CD8-positive, alpha-beta memory T cell (primary cell): ENCODE measurements at regions of chr6 and their contacts with region 1.

Region 1: GRCh38 chr6:89117211-89118108 is at the start of gene SRSF12:
- DNase-seq: peak; percentile 7 to 58 (median 38)
- H3K4me3 ChIP-seq: peak within 1 kb of the TSS; percentile 20
- H3K4me3 Mint-ChIP-seq: peak within 1 kb of the TSS; percentile 77 to 93 (median 86)
- H3K27ac ChIP-seq: no peak within 1 kb of the TSS
- H3K27ac Mint-ChIP-seq: peak within 1 kb of the TSS in 5 of 8 donors; percentile 21 to 53 (median 29)
- H3K4me1 ChIP-seq: peaks cover 5% of the 10 kb centered on the region
- H3K4me1 Mint-ChIP-seq: peaks cover 7 to 13% (median 9%) of the 10 kb centered on the region in 3 donors
- H3K27me3 ChIP-seq: peaks cover 3% of the 10 kb centered on the region
- H3K27me3 Mint-ChIP-seq: peaks cover 2 to 6% of the 10 kb centered on the region in 2 donors
- total RNA-seq, gene SRSF12: 0.71 to 0.81 TPM

Region 2: GRCh38 chr6:89886378-89887120 is 769.1 kb after region 1 on chr6:
- CTCF ChIA-PET with region 1: no interaction called
- POLR2A ChIA-PET with region 1: interaction called, 12 read pairs
- DNase-seq: no peak
- H3K4me3 ChIP-seq: no peak overlapping the region
- H3K4me3 Mint-ChIP-seq: no peak overlapping the region
- H3K27ac ChIP-seq: no peak overlapping the region
- H3K27ac Mint-ChIP-seq: no peak overlapping the region
- H3K4me1 ChIP-seq: no peaks in the 10 kb centered on the region
- H3K4me1 Mint-ChIP-seq: no peaks in the 10 kb centered on the region
- H3K27me3 ChIP-seq: no peaks in the 10 kb centered on the region
- H3K27me3 Mint-ChIP-seq: peaks cover 18 to 25% of the 10 kb centered on the region in 2 donors